ENCODE measurements at regions of chr22 and their contacts with region 1.

Region 1: GRCh38 chr22:38569972-38570778 is at the start of gene DMC1:
- DNase-seq: peak; percentile 95
- ATAC-seq: peak; percentile 98 to 99
- total RNA-seq, gene DMC1: 1.2 to 1.4 TPM

Region 2: GRCh38 chr22:38051900-38052862 is 518.0 kb before region 1 on chr22:
- intact Hi-C with region 1: loop called (anchors 5 to 10 kb)
- DNase-seq: peak; percentile 89
- ATAC-seq: peak; percentile 73 to 76

Region 3: GRCh38 chr22:38069372-38070249 is 500.6 kb before region 1 on chr22:
- intact Hi-C with region 1: loop called in 1 of 2 experiments (anchors 5 kb)
- DNase-seq: peak; percentile 71
- ATAC-seq: peak; percentile 71 to 78

Region 4: DNA sequence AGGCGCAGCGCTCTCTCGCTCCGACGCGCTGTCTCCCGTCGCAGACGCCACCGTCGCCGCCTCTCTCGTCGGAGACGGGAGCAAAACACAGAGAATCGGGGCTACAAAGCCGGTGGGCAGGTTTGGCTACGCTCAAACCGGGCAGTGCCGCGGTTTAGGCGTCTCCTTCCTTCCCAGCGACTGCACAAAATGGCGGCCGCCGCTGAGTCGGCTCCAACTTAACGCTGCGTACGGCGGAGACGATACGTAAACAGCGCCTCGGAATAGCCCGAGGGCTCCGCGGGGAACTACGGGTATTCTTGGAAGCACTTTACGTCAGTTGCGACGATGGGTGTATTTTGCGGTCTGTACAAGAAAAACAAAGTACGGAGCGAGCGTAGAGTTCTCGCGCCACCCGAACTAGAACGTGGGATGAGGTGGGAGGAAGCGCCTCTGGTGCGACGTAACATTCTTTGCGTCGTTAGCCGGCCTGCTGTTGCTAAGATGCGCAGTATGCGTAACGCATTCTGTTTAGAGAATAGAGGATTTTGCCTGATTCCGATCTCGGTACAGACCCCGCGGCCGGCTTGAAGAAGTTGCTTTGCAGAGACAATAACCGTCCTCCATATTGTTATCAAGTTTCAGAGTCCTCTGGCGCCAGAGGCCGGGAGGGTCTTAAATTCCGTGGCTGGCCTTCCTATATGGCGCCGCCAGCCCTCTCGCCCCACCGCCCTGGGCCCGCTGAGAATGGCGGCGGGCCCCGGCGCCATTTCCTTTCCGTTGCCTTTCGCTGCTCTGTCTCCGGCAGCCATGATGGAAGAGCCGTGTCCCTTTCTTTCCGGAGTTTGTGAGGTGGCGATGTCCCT is 63.8 kb before region 1 on chr22 and contains the start of gene DDX17:
- intact Hi-C with region 1: loop called (anchors 5 to 10 kb)
- DNase-seq: peak; percentile 91
- ATAC-seq: peak; percentile 88
- total RNA-seq, gene DDX17: 209 to 220 TPM

Measured in left cardiac atrium (tissue), 4 donors.